Transverse colon (tissue), 4 donors: ENCODE measurements at regions of chr17 and their contacts with region 1.

Region 1: GRCh38 chr17:35747540-35748017 is 5.5 kb downstream of the GAS2L2 start:
- DNase-seq: peak; percentile 77
- H3K4me3 ChIP-seq: no peak overlapping the region
- H3K27ac ChIP-seq: no peak overlapping the region
- H3K4me1 ChIP-seq: peaks cover 5 to 10% (median 5%) of the 10 kb centered on the region in 4 donors
- H3K27me3 ChIP-seq: peaks cover 49% of the 10 kb centered on the region
- CTCF ChIP-seq: peak; percentile 89 to 94 (median 91)
- EP300 ChIP-seq: no peak
- POLR2A ChIP-seq: no peak

Region 2: GRCh38 chr17:35141681-35142466 is 605.7 kb before region 1 on chr17 and contains the start of gene NLE1:
- in situ Hi-C with region 1: loop called in 1 of 4 experiments (anchors 25 kb)
- intact Hi-C with region 1: no loop called
- DNase-seq: peak; percentile 84
- H3K4me3 ChIP-seq: peak within 1 kb of the TSS; percentile 59 to 91 (median 78)
- H3K27ac ChIP-seq: peak within 1 kb of the TSS in 3 of 4 donors; percentile 35 to 63 (median 46)
- H3K4me1 ChIP-seq: peaks cover 0 to 18% (median 13%) of the 10 kb centered on the region in 4 donors
- H3K27me3 ChIP-seq: no peaks in the 10 kb centered on the region
- CTCF ChIP-seq: peak; percentile 81 to 96 (median 94)
- EP300 ChIP-seq: no peak
- POLR2A ChIP-seq: peak; percentile 33
- total RNA-seq, gene NLE1: 4.0 to 13.2 (median 6.9) TPM

Region 3: GRCh38 chr17:35170968-35171771 is 576.4 kb before region 1 on chr17:
- in situ Hi-C with region 1: loop called in 1 of 4 experiments (anchors 25 kb)
- intact Hi-C with region 1: no loop called
- DNase-seq: no peak
- H3K4me3 ChIP-seq: no peak overlapping the region
- H3K27ac ChIP-seq: no peak overlapping the region
- H3K4me1 ChIP-seq: no peaks in the 10 kb centered on the region
- H3K27me3 ChIP-seq: no peaks in the 10 kb centered on the region
- CTCF ChIP-seq: peak in 4 of 5 experiments; percentile 18 to 26 (median 24)
- EP300 ChIP-seq: no peak
- POLR2A ChIP-seq: no peak

Region 4: DNA sequence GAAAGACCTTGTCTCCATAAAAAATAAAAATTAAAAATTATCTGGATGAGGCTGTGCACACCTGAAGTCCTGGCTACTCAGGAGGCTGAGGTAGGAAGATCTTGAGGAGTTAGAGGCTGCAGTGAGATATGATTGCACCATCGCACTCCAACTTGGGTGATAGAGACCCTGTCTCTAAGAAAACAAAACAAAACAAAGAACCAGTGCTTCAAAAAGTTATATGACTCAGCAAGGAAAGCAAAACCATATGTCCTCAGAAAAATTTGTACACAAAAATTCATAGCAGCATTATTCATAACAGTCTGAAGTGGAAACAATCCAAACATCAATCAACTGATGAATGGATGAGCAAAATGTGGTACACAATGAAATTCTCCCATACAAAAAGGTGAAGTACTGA is 455.8 kb before region 1 on chr17:
- in situ Hi-C with region 1: loop called in 1 of 4 experiments (anchors 10 kb)
- intact Hi-C with region 1: no loop called
- DNase-seq: no peak
- H3K4me3 ChIP-seq: no peak overlapping the region
- H3K27ac ChIP-seq: no peak overlapping the region
- H3K4me1 ChIP-seq: no peaks in the 10 kb centered on the region
- H3K27me3 ChIP-seq: peaks cover 3% of the 10 kb centered on the region
- CTCF ChIP-seq: no peak
- EP300 ChIP-seq: no peak
- POLR2A ChIP-seq: no peak

Region 5: DNA sequence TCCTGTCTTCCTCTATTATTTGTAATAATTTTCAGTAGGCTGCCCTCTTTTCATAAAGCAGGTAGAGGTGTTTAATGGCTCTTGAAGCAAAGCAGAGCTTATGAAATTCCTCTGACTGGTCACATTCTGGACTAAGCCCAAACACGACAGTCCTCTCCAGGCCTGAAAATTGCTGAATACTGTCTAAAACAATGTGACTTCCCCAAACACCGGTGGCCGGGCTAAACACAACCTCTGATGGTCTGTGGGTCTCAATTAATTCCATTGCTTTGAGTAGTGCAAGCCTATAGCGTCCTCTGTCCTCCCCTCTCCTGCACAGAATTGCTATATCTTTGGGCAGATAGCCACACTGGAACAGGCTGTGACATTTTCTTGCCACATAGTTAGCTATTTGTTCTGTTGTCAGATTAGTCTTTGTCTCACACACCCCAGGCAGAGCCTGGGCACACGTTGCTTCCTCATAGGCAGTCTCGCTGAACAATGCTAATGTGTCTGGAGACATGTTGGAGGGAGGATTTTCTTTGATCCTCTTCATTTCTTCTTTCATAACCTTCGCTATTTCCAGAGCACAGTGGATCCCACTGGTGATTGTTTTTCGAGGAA is 199.3 kb before region 1 on chr17:
- in situ Hi-C with region 1: no loop called
- intact Hi-C with region 1: loop called (anchors 5 kb)
- DNase-seq: no peak
- H3K4me3 ChIP-seq: no peak overlapping the region
- H3K27ac ChIP-seq: no peak overlapping the region
- H3K4me1 ChIP-seq: no peaks in the 10 kb centered on the region
- H3K27me3 ChIP-seq: peaks cover 19% of the 10 kb centered on the region
- CTCF ChIP-seq: no peak
- EP300 ChIP-seq: no peak
- POLR2A ChIP-seq: no peak

Region 6: GRCh38 chr17:35612924-35613521 is 134.6 kb before region 1 on chr17:
- in situ Hi-C with region 1: loop called in 3 of 4 experiments (anchors 25 kb)
- intact Hi-C with region 1: loop called (anchors 10 kb)
- DNase-seq: peak; percentile 35
- H3K4me3 ChIP-seq: no peak overlapping the region
- H3K27ac ChIP-seq: no peak overlapping the region
- H3K4me1 ChIP-seq: peaks cover 0 to 9% (median 5%) of the 10 kb centered on the region in 4 donors
- H3K27me3 ChIP-seq: no peaks in the 10 kb centered on the region
- CTCF ChIP-seq: peak; percentile 41 to 46 (median 42)
- EP300 ChIP-seq: no peak
- POLR2A ChIP-seq: no peak

Region 7: DNA sequence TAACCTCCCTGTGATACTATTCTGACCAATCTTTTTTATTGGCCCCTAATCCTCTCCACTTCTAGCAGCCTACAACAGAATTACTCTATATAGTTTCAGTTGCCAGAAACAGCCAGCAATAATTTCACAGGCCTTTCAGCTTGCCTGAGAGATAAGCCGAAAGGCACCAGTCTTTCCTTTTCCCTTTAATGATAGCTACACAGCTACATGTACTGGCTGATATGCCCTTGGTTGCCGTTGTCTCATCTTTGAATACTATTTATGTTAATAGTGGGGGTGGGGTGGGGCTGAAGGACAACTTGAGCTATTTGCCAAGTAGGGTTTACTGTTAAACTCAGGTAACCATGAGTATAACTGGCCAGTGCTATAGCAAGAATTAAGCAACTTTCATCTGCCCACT is 52.0 kb before region 1 on chr17:
- in situ Hi-C with region 1: no loop called
- intact Hi-C with region 1: loop called (anchors 10 kb)
- DNase-seq: no peak
- H3K4me3 ChIP-seq: no peak overlapping the region
- H3K27ac ChIP-seq: no peak overlapping the region
- H3K4me1 ChIP-seq: no peaks in the 10 kb centered on the region
- H3K27me3 ChIP-seq: no peaks in the 10 kb centered on the region
- CTCF ChIP-seq: no peak
- EP300 ChIP-seq: no peak
- POLR2A ChIP-seq: no peak